Left cardiac atrium (tissue), 4 donors: ENCODE measurements at regions of chr17 and their contacts with region 1.

Region 1: DNA sequence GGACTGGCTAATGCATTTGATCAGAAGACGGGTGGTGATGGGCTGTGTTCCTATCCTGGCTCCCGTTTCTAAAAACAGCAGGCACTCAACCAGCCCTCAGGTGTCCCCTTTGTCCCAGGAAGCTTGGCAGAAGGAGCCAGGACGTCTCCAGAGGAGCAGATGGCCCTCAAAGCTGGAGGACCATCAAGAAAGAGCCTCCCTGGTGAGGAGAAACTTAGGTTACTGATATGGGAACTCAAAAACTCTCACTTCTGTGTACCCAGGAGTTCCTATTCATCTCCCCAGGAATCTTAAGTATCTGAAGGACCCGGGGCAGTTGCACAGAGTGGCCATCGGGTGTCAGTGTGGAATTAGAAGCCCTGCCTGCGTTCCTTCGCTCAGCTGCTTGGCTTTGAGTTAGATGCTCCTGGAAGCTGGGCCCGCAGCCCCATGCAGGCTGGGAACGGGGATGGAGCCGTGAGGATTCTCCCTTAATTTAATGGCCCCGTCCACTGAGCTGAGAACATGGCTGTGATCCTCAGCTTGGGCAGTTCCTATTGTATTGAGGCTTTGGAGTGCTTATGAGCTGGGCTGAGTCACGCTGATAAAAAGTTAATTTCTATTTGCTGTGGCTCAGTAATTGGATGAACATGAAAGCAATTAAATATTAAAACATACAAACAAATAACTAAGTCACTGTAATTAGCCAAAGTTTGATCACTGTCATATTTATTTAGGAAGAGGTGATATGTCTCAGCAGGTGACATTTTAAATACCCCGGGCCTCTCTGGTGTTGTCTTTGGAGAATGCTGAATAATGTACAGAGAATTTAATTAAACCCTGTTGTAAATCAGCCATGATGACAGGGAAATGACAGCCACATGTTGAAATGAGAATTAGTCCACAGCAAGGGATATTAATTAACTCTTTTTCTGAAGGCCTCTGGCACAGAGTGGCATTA is 402.1 kb downstream of the SEC14L1 start:
- DNase-seq: peak; percentile 85
- ATAC-seq: peak; percentile 92 to 93

Region 2: GRCh38 chr17:77602062-77602746 is 59.4 kb after region 1 on chr17:
- intact Hi-C with region 1: loop called in 1 of 2 experiments (anchors 2 kb)
- DNase-seq: peak; percentile 82
- ATAC-seq: peak; percentile 90 to 95

Region 3: GRCh38 chr17:77677211-77677610 is 134.4 kb after region 1 on chr17:
- intact Hi-C with region 1: loop called in 1 of 2 experiments (anchors 5 kb)
- DNase-seq: no peak
- ATAC-seq: peak in 1 of 2 donors; percentile 21

Region 4: DNA sequence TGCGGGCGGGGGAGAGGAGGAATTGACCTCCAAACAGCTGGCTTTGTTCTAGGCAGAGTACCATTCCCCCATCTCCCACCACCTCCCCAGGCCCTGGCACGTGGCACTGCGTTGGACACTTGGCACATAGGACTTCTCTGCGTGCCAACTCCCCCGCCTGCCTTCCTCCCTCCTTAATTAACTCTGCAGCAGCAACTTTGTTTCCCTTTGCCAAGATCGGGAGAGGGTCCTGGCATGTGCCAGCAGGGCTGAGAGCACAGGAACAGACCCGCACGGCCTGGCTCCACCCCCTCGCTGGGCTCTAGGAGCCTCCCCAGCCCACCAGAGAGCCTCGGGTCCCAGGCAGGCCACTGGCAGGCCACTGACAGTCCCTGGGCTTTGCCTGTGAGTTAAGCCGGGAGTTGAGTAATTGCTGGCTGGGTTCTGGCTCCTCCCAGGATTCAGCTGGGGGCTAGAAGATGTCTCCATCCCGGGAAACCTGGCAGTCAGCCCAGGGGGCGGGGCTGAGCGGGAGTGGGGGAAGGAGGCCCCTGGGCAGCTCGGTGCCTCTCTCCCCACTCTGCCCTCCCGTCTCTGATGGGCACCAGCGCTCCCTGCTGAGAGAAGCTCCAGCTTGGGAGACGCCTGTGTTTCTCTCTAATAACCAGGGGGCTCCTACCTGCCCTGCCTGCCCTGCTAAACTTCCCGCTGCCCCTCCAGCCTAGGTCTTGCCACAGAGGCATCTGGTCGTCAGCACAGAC is 191.7 kb after region 1 on chr17:
- intact Hi-C with region 1: loop called (anchors 5 to 10 kb)
- DNase-seq: peak; percentile 93
- ATAC-seq: peak; percentile 86 to 88

Region 5: DNA sequence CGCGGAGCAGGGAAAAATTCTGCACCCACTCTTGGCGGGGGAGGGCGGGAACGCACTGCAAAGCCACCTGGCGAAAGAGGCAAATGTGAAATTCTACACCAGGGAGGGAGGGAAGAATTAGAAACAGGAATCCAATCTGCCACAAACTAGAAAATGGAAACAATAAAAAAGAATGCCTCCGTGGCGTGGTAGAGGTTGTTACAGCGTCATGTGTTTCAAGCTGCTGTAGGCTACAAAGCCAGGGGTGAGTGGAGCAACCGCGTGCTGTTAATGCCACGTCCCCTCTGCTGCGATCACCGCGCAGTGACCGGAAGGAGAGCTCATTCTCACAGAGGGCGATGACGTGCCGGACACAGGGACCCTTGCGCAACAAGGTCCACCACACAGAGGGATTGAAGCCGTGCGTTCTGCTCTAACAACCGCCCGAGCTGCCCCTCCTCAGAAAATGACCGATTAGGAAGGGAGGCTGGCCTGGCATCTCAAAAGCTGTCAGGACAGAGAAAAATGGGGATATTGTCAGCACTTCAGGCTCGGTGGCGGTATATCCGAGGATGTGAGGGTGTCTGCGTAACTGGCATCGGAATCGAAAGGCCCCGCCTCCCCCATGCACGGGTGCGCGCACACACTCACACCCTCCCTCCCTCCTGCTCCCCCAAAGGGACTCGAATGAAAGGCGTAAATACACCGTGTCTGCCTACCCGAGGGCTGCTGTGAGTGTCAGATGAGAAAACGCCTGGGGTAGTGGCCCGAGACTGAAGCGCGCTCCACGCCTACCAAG is 344.8 kb after region 1 on chr17:
- intact Hi-C with region 1: loop called in 1 of 2 experiments (anchors 5 kb)
- DNase-seq: peak; percentile 95
- ATAC-seq: peak; percentile 87 to 90

Region 6: GRCh38 chr17:77999413-78000173 is 456.8 kb after region 1 on chr17:
- intact Hi-C with region 1: loop called in 1 of 2 experiments (anchors 10 kb)
- DNase-seq: no peak
- ATAC-seq: peak in 1 of 2 donors; percentile 31

Region 7: GRCh38 chr17:78013683-78014467 is 471.1 kb after region 1 on chr17:
- intact Hi-C with region 1: loop called (anchors 2 to 10 kb)
- DNase-seq: peak; percentile 31
- ATAC-seq: peak; percentile 72 to 73